ENCODE measurements at regions of chr13 and their contacts with region 1.

Region 1: DNA sequence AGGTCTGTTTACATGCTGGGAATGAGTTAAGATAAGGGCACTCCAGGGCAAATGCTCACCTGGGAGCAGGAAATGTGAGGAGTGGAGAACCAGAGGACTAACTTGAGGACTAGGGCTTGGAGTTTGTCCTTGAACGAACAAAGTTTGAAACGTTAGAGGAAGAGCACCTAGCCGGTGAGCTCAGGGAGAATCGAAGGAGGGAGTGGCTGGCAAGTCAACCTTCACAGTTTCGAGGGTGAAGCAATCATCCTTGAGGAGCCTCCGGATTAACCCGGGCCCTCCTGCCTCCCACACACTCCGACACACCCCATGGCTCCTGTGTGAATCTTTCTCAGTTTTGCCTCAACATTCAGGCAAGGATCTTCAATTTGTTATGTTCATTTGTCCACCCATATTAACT is 58.6 kb downstream of the LMO7 start:
- DNase-seq: no peak
- H3K4me3 ChIP-seq: no peak overlapping the region
- H3K27ac ChIP-seq: no peak overlapping the region
- H3K4me1 ChIP-seq: no peaks in the 10 kb centered on the region
- H3K27me3 ChIP-seq: no peaks in the 10 kb centered on the region
- CTCF ChIP-seq: no peak
- POLR2A ChIP-seq: no peak

Region 2: GRCh38 chr13:75025956-75026355 is 668.8 kb before region 1 on chr13:
- CTCF ChIA-PET with region 1: no interaction called
- POLR2A ChIA-PET with region 1: no interaction called
- dilution Hi-C with region 1: no loop called
- intact Hi-C with region 1: no loop called
- DNase-seq: no peak
- H3K4me3 ChIP-seq: no peak overlapping the region
- H3K27ac ChIP-seq: no peak overlapping the region
- H3K4me1 ChIP-seq: no peaks in the 10 kb centered on the region
- H3K27me3 ChIP-seq: no peaks in the 10 kb centered on the region
- CTCF ChIP-seq: no peak
- POLR2A ChIP-seq: no peak

Region 3: GRCh38 chr13:75656425-75656989 is 38.2 kb before region 1 on chr13:
- CTCF ChIA-PET with region 1: no interaction called
- POLR2A ChIA-PET with region 1: no interaction called
- dilution Hi-C with region 1: no loop called
- intact Hi-C with region 1: no loop called
- DNase-seq: no peak
- H3K4me3 ChIP-seq: no peak overlapping the region
- H3K27ac ChIP-seq: no peak overlapping the region
- H3K4me1 ChIP-seq: no peaks in the 10 kb centered on the region
- H3K27me3 ChIP-seq: no peaks in the 10 kb centered on the region
- CTCF ChIP-seq: no peak
- POLR2A ChIP-seq: no peak

Region 4: DNA sequence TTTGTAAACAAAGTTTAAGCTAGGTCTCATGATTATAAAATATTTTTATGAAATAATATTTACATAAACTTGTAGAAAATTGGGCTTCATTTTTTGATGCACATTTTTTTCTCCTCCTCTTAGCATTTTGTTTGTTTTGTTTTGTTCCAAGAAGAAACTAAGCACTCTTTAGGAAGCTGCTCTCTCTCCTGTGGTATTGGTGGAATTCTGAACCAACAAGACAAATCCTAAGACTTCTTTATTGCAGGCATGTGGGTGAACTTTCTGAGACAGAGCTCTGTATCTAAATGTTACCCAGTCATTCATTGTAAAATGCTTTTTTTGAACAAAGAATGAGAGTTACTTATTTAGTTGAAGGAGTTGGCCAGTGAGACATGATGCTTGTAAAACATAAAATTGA is 19.3 kb before region 1 on chr13:
- CTCF ChIA-PET with region 1: interaction called, 12 read pairs
- POLR2A ChIA-PET with region 1: no interaction called
- dilution Hi-C with region 1: no loop called
- intact Hi-C with region 1: no loop called
- DNase-seq: no peak
- H3K4me3 ChIP-seq: no peak overlapping the region
- H3K27ac ChIP-seq: no peak overlapping the region
- H3K4me1 ChIP-seq: peaks cover 1% of the 10 kb centered on the region
- H3K27me3 ChIP-seq: no peaks in the 10 kb centered on the region
- CTCF ChIP-seq: no peak
- POLR2A ChIP-seq: no peak

Region 5: DNA sequence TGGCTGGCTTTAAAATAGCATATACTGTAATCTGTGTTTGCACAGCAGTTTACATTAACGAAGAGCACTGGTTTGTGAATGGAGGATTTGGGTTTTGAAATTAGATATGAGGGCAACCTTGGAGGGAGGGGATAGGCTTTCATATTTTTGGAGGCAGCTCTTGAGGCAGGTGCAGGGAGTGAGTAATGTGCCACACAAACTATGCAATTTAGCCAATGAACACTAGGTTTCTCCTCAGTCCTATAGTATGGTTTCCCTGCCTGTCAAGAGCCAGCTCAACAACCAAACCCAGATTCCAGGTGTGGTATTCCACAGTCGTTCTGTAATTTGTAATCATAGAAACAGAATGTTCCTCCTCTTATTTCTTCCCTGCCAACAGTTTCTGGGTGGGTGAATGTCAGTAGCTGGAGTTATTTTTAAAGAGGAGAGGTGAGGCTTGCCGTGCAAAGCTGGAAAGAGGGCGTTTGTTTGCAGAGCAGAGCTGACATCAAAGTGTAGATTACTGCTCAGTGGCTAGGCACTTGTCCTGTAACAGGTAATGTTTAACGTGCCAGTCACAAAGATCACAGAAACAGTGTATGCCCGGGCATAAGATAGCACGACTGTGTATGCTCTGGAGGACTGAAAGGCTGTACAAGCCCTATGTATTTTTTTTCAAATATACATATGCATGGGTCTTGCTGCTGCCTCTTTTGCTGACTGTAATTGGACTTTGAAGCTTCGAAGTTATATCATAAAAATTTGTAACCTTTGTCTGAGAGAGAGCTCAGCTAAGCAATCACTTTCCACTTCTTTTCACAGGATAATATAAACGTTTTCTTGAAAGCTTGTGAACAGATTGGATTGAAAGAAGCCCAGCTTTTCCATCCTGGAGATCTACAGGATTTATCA is 65.7 kb after region 1 on chr13:
- CTCF ChIA-PET with region 1: interaction called, 33 read pairs
- POLR2A ChIA-PET with region 1: no interaction called
- dilution Hi-C with region 1: no loop called
- intact Hi-C with region 1: no loop called
- DNase-seq: peak; percentile 54
- H3K4me3 ChIP-seq: no peak overlapping the region
- H3K27ac ChIP-seq: no peak overlapping the region
- H3K4me1 ChIP-seq: peaks cover 15% of the 10 kb centered on the region
- H3K27me3 ChIP-seq: no peaks in the 10 kb centered on the region
- CTCF ChIP-seq: peak in 1 of 2 donors; percentile 5
- POLR2A ChIP-seq: no peak

Region 6: DNA sequence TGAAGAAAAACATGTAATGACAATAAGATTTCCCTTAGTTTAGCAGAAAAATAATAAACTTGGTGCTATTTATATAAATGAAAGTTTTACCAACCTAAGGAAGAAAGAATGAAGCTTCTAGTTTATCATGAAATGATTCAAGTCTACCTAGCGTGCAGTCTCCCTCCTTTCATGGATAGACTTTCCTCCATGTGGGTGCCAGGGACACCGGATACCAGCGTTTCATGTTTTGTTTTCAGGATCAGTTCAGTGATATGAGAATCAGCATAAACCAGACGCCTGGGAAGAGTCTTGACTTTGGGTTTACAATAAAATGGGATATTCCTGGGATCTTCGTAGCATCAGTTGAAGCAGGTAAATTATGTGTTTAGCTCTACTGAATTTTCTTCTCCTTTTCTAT is 138.1 kb after region 1 on chr13:
- CTCF ChIA-PET with region 1: interaction called, 14 read pairs
- POLR2A ChIA-PET with region 1: no interaction called
- dilution Hi-C with region 1: no loop called
- intact Hi-C with region 1: no loop called
- DNase-seq: no peak
- H3K4me3 ChIP-seq: no peak overlapping the region
- H3K27ac ChIP-seq: no peak overlapping the region
- H3K4me1 ChIP-seq: no peaks in the 10 kb centered on the region
- H3K27me3 ChIP-seq: no peaks in the 10 kb centered on the region
- CTCF ChIP-seq: no peak
- POLR2A ChIP-seq: no peak

Region 7: GRCh38 chr13:75876360-75877050 is 181.8 kb after region 1 on chr13:
- CTCF ChIA-PET with region 1: interaction called, 134 read pairs
- POLR2A ChIA-PET with region 1: no interaction called
- dilution Hi-C with region 1: no loop called
- intact Hi-C with region 1: no loop called
- DNase-seq: peak; percentile 74
- H3K4me3 ChIP-seq: no peak overlapping the region
- H3K27ac ChIP-seq: no peak overlapping the region
- H3K4me1 ChIP-seq: no peaks in the 10 kb centered on the region
- H3K27me3 ChIP-seq: peaks cover 0 to 2% of the 10 kb centered on the region in 2 experiments
- CTCF ChIP-seq: peak; percentile 76 to 78
- POLR2A ChIP-seq: no peak

Region 8: DNA sequence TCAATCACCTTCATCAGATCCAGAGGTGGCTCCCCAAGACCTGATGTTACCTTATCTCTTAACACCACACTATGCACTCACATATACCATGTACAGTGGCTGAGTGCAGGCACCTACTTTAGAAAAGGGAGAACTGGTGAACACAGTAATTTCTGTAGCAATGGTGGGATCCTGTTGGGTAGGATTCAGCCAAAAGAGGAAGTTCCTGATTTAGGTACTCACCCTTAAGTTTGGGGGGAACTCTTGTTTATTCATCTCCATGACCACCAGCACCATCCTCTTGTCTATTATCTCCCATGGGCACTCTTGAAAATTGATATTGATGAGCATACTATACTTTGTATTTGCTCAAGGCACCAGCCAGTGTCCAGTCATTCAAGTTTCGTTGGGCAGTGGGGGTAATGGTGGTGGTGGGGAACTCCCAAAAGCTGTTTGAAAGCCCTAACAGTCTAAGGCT is 265.8 kb after region 1 on chr13:
- CTCF ChIA-PET with region 1: no interaction called
- POLR2A ChIA-PET with region 1: no interaction called
- dilution Hi-C with region 1: no loop called
- intact Hi-C with region 1: no loop called
- DNase-seq: no peak
- H3K4me3 ChIP-seq: no peak overlapping the region
- H3K27ac ChIP-seq: no peak overlapping the region
- H3K4me1 ChIP-seq: no peaks in the 10 kb centered on the region
- H3K27me3 ChIP-seq: no peaks in the 10 kb centered on the region
- CTCF ChIP-seq: no peak
- POLR2A ChIP-seq: no peak

Region 9: DNA sequence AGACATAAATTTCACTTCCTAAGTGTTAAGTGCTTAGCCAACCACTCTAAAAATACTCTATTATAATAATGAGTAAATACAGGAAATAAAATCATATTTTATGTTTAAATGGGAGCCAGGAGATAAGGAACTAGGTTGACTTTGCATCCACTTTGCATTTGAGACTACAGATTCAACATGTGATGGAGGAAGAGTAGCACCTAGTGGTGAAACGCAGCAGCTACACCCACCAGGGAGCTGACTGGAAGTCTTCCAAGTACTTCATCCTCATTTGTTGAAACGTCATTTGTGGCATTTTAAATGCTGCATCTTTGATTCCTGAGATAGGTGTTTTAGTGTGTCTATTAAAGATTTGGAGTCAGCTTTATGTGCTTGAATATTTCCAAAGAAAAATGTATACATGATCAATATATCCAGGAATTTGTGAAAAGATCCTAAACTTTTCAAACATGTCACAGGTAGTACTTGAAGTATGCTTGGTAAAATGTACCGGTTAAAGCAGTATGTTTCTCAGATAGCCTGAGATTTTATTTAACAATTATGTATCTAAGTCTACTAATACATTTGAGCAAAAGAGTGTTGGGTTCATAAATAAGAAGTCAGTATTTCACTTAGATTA is 1208.9 kb after region 1 on chr13:
- CTCF ChIA-PET with region 1: interaction called, 35 read pairs
- POLR2A ChIA-PET with region 1: no interaction called
- dilution Hi-C with region 1: no loop called
- intact Hi-C with region 1: loop called (anchors 1 kb)
- DNase-seq: peak; percentile 89
- H3K4me3 ChIP-seq: no peak overlapping the region
- H3K27ac ChIP-seq: no peak overlapping the region
- H3K4me1 ChIP-seq: peaks cover 5% of the 10 kb centered on the region
- H3K27me3 ChIP-seq: peaks cover 3 to 12% of the 10 kb centered on the region in 2 experiments
- CTCF ChIP-seq: peak; percentile 93 to 97
- POLR2A ChIP-seq: no peak

Measured in endothelial cell of umbilical vein (primary cell).